ENCODE measurements at regions of chr12 and their contacts with region 1.

Region 1: GRCh38 chr12:109597795-109598427 is 24.3 kb downstream of the MVK start:
- DNase-seq: peak; percentile 63
- H3K4me3 Mint-ChIP-seq: no peak overlapping the region
- H3K27ac Mint-ChIP-seq: no peak overlapping the region
- H3K4me1 Mint-ChIP-seq: peaks cover 29% of the 10 kb centered on the region
- H3K27me3 Mint-ChIP-seq: no peaks in the 10 kb centered on the region

Region 2: DNA sequence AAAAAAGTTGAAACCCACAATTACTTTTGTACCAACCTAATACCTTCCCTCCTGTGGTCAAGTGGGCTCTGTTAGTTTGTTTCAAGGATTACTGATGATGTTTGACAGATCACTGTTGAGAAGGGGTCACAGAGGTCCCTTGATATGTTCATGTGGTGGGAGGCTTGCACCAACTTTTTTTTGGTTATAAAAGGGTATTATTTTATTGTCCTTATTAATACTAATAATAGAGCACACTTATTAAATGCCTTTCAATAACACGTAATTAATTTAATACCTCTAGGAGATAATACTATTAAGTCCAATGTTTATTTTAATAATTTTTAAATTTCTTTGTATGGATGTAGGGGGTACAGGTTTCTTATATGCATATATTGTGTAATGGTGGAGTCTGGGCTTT is 116.0 kb before region 1 on chr12:
- CTCF ChIA-PET with region 1: no interaction called
- POLR2A ChIA-PET with region 1: no interaction called
- DNase-seq: no peak
- H3K4me3 Mint-ChIP-seq: no peak overlapping the region
- H3K27ac Mint-ChIP-seq: no peak overlapping the region
- H3K4me1 Mint-ChIP-seq: peaks cover 14% of the 10 kb centered on the region
- H3K27me3 Mint-ChIP-seq: no peaks in the 10 kb centered on the region

Region 3: GRCh38 chr12:109563291-109564284 is 34.3 kb before region 1 on chr12:
- CTCF ChIA-PET with region 1: no interaction called
- POLR2A ChIA-PET with region 1: no interaction called
- DNase-seq: no peak
- H3K4me3 Mint-ChIP-seq: no peak overlapping the region
- H3K27ac Mint-ChIP-seq: no peak overlapping the region
- H3K4me1 Mint-ChIP-seq: no peaks in the 10 kb centered on the region
- H3K27me3 Mint-ChIP-seq: no peaks in the 10 kb centered on the region

Region 4: DNA sequence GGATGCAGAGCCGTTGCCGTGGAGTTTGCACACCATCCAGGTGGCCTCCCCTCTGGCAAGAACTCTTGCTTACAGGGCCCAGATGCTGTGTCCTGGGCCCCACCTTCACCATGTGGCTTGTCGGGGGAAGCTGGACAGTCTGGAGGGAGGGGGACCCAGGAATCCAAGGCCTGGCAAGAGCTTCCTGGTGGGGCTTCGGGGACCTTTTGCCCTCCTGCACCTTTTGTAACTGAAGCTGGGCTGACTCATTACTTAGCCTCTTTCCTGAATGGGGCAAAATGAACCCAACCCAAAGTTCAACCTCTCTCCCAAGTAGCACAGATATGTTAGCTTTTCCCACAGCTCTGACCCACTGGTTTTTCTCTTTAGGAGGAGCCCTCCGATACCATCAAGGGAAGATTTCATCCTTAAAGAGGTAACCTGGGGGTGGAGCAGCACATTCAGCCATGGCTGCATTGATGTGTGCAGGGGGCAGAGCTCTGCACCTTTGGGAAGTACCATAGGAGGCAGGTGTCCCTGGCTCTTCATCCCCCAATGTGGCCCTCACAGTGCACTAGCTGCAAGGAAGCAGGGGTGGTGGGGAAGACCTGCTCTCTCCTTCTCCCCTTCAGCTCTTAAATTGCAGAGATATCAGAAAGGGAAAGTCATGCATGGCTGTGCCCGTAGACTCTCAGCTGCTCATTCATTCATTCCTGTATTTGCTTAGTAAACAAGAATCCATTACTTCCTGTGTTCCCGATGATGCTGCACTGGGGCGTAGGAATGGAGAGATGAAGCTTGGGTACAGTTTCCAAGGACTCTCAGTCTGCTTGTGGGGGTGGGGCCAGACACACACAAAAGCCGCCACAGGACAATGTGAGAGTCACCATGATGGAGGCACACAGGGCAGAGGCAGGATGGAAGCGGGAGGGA is 11.3 kb before region 1 on chr12:
- CTCF ChIA-PET with region 1: interaction called, 24 read pairs
- POLR2A ChIA-PET with region 1: no interaction called
- DNase-seq: no peak
- H3K4me3 Mint-ChIP-seq: no peak overlapping the region
- H3K27ac Mint-ChIP-seq: no peak overlapping the region
- H3K4me1 Mint-ChIP-seq: no peaks in the 10 kb centered on the region
- H3K27me3 Mint-ChIP-seq: no peaks in the 10 kb centered on the region

Region 5: GRCh38 chr12:109609342-109609741 is 11.4 kb after region 1 on chr12:
- CTCF ChIA-PET with region 1: no interaction called
- POLR2A ChIA-PET with region 1: no interaction called
- DNase-seq: no peak
- H3K4me3 Mint-ChIP-seq: no peak overlapping the region
- H3K27ac Mint-ChIP-seq: no peak overlapping the region
- H3K4me1 Mint-ChIP-seq: no peaks in the 10 kb centered on the region
- H3K27me3 Mint-ChIP-seq: peaks cover 20% of the 10 kb centered on the region

Region 6: DNA sequence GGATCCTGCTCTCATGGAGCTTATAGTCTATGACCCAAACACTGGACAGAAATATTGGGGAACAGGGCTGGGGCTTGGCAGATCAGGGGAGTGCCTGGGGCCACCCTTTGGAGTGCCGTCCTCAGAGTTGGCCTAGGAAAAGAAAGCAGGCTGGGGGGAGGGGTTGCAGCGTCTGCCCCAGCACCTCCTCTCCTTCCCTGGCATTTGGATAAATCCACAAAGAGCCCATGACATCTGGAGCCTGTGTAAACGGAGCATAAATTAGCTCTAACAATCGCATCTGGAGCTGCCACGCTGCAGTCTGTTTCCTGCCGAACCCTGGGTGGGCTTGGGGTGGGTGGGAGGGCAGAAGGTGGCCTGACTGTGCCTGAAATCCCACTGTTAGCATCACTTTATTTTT is 39.4 kb after region 1 on chr12:
- CTCF ChIA-PET with region 1: no interaction called
- POLR2A ChIA-PET with region 1: no interaction called
- DNase-seq: no peak
- H3K4me3 Mint-ChIP-seq: no peak overlapping the region
- H3K27ac Mint-ChIP-seq: no peak overlapping the region
- H3K4me1 Mint-ChIP-seq: no peaks in the 10 kb centered on the region
- H3K27me3 Mint-ChIP-seq: peaks cover 3% of the 10 kb centered on the region

Measured in activated CD4-positive, alpha-beta T cell treated with anti-CD3 and anti-CD28 coated beads, Interleukin-2, amount 10 ng/mL, durations not matched to agents 7 days and 5 days (primary cell).